ENCODE measurements at regions of chr15 and their contacts with region 1.

Region 1: GRCh38 chr15:31326156-31326732 is 391 bp upstream of the KLF13 start:
- DNase-seq: peak; percentile 99 to 100 (median 100)
- ATAC-seq: peak; percentile 73
- H3K4me3 ChIP-seq: peak overlapping the region; percentile 55 to 82
- H3K4me3 Mint-ChIP-seq: peak overlapping the region; percentile 85
- H3K27ac ChIP-seq: peak overlapping the region; percentile 81 to 96
- H3K27ac Mint-ChIP-seq: peak overlapping the region; percentile 97
- H3K4me1 ChIP-seq: peaks cover 43% of the 10 kb centered on the region
- H3K4me1 Mint-ChIP-seq: peaks cover 60% of the 10 kb centered on the region
- H3K27me3 ChIP-seq: no peaks in the 10 kb centered on the region
- H3K27me3 Mint-ChIP-seq: no peaks in the 10 kb centered on the region
- CTCF ChIP-seq: no peak

Region 2: DNA sequence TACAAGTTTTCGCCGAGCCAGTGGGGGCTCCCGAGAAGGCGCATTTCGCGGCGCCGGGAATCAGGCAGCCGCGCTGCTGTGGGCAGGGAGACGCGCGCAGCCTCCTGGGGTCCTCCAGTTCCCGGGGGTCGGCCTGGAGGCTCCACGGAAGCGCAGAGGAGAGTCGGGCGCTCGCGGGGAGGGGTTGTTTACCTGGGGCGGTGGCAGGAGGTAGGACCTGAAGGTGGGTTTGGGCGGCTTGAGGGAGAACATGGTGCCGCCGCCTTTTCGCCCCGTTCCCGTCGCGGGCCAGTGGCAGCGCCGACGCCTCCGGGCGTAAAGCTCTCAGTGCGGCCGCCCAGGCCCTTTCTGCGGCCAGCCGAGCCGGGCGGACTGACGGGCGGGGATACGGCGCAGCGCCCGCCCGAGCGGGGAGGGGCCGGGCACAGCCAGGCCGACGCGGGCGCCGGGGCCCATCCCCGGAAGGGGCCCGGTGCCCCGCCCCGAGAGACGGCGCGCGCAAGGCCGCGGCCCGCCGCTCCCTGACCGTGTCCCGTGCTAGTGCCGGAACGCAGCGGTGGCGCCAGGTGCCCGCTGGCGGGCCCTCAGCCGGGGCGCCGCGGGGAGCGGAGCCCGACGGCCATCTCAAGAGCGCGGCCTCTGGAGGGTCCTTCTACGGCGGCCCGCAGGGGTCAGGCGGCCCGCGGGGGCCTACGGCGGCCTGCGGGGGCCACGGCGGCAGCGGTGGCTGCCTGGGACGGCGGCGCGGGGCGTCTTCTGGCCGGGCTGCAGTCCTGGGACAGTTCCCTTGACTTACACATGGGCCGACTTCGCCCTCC is 334.8 kb before region 1 on chr15 and contains the start of gene MTMR10:
- CTCF ChIA-PET with region 1: no interaction called
- POLR2A ChIA-PET with region 1: no interaction called
- intact Hi-C with region 1: loop called (anchors 5 kb)
- DNase-seq: peak; percentile 62 to 86 (median 69)
- ATAC-seq: peak; percentile 93
- H3K4me3 ChIP-seq: peak within 1 kb of the TSS; percentile 71 to 93
- H3K4me3 Mint-ChIP-seq: peak within 1 kb of the TSS; percentile 94
- H3K27ac ChIP-seq: peak within 1 kb of the TSS; percentile 75 to 77
- H3K27ac Mint-ChIP-seq: peak within 1 kb of the TSS; percentile 95
- H3K4me1 ChIP-seq: peaks cover 26% of the 10 kb centered on the region
- H3K4me1 Mint-ChIP-seq: peaks cover 34% of the 10 kb centered on the region
- H3K27me3 ChIP-seq: no peaks in the 10 kb centered on the region
- H3K27me3 Mint-ChIP-seq: no peaks in the 10 kb centered on the region
- CTCF ChIP-seq: no peak
- total RNA-seq, gene MTMR10: 54.7 to 56.4 TPM

Region 3: GRCh38 chr15:31215490-31216214 is 110.6 kb before region 1 on chr15:
- CTCF ChIA-PET with region 1: interaction called, 6 read pairs
- POLR2A ChIA-PET with region 1: interaction called, 29 read pairs
- intact Hi-C with region 1: loop called (anchors 1 kb)
- DNase-seq: peak; percentile 56 to 91 (median 84)
- ATAC-seq: peak; percentile 76
- H3K4me3 ChIP-seq: peak overlapping the region; percentile 32 to 55
- H3K4me3 Mint-ChIP-seq: peak overlapping the region; percentile 56
- H3K27ac ChIP-seq: peak overlapping the region; percentile 56 to 75
- H3K27ac Mint-ChIP-seq: peak overlapping the region; percentile 83
- H3K4me1 ChIP-seq: peaks cover 21% of the 10 kb centered on the region
- H3K4me1 Mint-ChIP-seq: peaks cover 30% of the 10 kb centered on the region
- H3K27me3 ChIP-seq: no peaks in the 10 kb centered on the region
- H3K27me3 Mint-ChIP-seq: no peaks in the 10 kb centered on the region
- CTCF ChIP-seq: peak; percentile 73

Region 4: DNA sequence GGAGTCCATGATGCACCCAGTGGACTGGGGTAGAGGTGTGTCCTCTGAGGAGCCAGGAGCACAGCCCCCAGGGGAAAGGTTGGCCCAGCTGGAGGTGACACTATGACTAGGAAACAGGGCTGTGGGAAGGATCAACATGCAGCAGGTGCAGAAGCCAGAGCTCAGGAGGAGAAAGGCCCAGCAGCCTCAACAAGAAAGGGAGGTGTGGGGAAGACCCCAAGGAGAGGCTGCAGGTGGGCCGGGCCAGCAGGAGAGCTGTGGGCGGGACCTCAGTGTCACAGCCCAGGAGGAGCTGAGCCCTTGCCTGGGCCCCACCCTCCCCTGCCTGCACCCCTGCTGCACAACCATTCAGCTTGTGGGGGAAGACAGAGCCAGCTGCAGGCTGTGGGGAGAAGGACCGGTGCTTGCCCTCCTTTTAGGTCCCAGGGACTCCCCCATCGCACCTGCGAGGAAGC is 18.0 kb before region 1 on chr15:
- CTCF ChIA-PET with region 1: interaction called, 3 read pairs
- POLR2A ChIA-PET with region 1: interaction called, 11 read pairs
- intact Hi-C with region 1: no loop called
- DNase-seq: peak in 5 of 9 experiments; percentile 15 to 62 (median 38)
- ATAC-seq: peak; percentile 71
- H3K4me3 ChIP-seq: no peak overlapping the region
- H3K4me3 Mint-ChIP-seq: peak overlapping the region; percentile 19
- H3K27ac ChIP-seq: no peak overlapping the region
- H3K27ac Mint-ChIP-seq: no peak overlapping the region
- H3K4me1 ChIP-seq: peaks cover 35% of the 10 kb centered on the region
- H3K4me1 Mint-ChIP-seq: peaks cover 44% of the 10 kb centered on the region
- H3K27me3 ChIP-seq: peaks cover 0 to 3% of the 10 kb centered on the region in 2 experiments
- H3K27me3 Mint-ChIP-seq: no peaks in the 10 kb centered on the region
- CTCF ChIP-seq: no peak

Region 5: DNA sequence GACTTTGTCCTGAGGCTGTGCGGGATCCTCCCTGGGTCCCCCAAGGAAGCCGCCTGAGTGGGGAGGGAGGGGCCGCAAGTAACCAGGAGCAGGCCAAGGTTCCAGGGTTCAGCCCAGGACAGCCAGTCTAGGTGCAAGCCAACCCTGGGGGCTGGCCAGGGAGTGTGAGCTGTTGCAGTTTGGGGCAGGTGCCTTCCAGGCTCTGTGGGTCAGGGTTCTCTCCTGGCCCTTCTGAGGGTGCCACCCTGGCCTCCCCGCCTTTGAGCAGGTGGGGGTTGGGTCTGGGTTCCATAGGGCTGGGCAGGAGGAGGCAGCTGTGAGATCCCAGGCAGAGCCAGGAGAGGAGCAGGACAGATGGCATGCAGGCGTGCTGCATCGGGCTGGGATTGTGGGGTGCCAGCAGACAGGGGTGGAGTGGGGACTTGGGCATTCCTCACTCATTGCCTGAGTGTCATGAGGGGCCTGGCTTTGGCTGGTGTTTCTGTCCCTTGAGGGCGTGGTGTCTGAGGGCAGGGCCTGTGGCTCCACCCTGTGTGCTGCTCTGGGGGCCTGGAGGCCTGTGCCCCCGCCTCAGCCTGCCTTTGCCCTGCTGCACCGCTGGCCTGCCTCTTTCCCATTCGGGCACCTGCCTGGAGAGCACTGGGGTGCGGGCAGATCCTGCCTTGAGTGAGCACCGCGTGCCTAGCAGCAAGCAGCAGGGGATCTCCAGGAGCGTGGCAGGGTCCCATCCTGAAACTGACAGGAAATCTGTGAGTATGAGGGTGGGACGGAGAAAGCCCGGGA is 18.8 kb after region 1 on chr15:
- CTCF ChIA-PET with region 1: interaction called, 7 read pairs
- POLR2A ChIA-PET with region 1: interaction called, 86 read pairs
- intact Hi-C with region 1: loop called (anchors 1 kb)
- DNase-seq: peak in 1 of 9 experiments; percentile 68
- ATAC-seq: no peak
- H3K4me3 ChIP-seq: peak overlapping the region; percentile 55 to 72
- H3K4me3 Mint-ChIP-seq: peak overlapping the region; percentile 91
- H3K27ac ChIP-seq: peak overlapping the region; percentile 70 to 78
- H3K27ac Mint-ChIP-seq: peak overlapping the region; percentile 97
- H3K4me1 ChIP-seq: peaks cover 99% of the 10 kb centered on the region
- H3K4me1 Mint-ChIP-seq: peaks cover 98% of the 10 kb centered on the region
- H3K27me3 ChIP-seq: no peaks in the 10 kb centered on the region
- H3K27me3 Mint-ChIP-seq: no peaks in the 10 kb centered on the region
- CTCF ChIP-seq: no peak

Region 6: DNA sequence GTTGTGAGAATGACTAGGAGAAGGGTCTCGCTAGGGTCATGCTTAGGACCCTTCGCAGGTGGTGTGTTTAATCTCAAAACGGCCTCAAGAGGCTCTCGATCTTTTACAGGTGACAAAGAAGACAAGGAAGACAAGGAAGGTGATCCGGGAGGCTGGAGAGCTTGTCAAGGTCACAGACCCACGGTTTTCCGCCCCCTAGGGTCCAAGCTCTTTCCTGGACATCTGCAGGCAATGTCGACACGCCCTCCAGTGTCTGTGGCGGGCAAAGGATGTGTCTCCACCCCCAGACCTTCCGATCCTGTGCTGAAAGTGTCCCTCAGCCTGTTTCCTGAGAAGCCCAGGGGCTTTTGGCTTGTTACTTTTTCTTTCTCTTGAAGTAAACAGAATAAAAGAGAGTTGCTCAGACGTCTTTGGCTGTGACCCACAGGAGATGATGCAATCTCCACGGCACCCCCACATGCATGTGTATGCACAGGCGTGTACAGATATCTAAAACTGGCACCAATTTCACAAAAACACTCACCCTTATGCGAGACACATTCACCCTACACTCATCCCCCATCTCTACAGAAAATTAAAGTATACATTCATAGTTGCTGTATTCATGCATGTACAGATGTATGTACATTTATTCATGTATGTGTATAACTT is 109.1 kb after region 1 on chr15:
- CTCF ChIA-PET with region 1: interaction called, 4 read pairs
- POLR2A ChIA-PET with region 1: interaction called, 35 read pairs
- intact Hi-C with region 1: loop called (anchors 1 kb)
- DNase-seq: peak; percentile 62 to 96 (median 84)
- ATAC-seq: peak; percentile 70
- H3K4me3 ChIP-seq: peak overlapping the region; percentile 43 to 46
- H3K4me3 Mint-ChIP-seq: peak overlapping the region; percentile 80
- H3K27ac ChIP-seq: peak overlapping the region; percentile 89 to 95
- H3K27ac Mint-ChIP-seq: peak overlapping the region; percentile 98
- H3K4me1 ChIP-seq: peaks cover 66% of the 10 kb centered on the region
- H3K4me1 Mint-ChIP-seq: peaks cover 83% of the 10 kb centered on the region
- H3K27me3 ChIP-seq: no peaks in the 10 kb centered on the region
- H3K27me3 Mint-ChIP-seq: no peaks in the 10 kb centered on the region
- CTCF ChIP-seq: peak; percentile 33

Region 7: DNA sequence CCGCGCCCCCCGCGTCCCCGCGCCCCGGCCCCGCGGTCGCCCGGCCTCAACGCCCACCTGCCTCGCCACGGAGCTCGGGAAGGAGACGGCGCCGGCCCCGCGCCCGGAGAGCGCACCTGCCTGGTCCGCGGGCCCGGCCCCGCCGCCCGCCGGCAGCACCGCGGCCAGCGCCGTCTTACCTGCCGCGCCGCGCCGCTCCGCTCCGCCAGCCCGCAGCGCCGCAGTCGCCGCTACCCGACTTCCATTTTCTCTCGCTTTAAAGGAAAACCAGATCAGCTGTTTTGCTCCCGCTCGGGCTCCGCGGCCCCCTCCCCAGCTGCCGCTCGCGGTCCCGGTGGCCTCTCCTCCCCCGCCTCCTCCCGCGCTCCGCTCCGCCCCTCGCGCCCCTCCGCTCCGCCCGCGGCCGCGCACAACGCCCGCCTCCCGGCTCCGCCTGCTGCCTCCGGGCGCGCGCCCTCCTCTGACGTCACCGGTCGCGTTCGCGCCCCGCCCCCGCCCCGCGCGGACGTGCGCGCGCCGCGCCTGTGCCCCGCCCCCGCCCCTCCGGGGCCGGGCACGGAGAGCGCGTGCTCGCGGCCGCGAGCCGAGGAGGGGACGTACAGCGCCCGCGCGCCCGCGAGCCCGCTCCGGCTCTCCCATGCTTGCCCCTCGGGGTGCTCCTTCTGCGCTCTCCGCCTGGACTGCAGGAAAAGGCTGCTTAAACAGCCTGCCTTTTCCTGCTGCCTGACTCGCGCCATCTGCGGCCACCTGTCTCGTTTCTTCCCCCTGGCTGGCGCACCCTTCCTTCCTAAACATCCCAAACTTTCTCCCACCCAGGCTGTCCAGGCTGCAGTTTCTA is 544.3 kb after region 1 on chr15:
- CTCF ChIA-PET with region 1: no interaction called
- POLR2A ChIA-PET with region 1: no interaction called
- intact Hi-C with region 1: loop called in 1 of 2 experiments (anchors 5 kb)
- DNase-seq: peak; percentile 66 to 93 (median 85)
- ATAC-seq: peak; percentile 87
- H3K4me3 ChIP-seq: peak within 1 kb of the TSS; percentile 71 to 83
- H3K4me3 Mint-ChIP-seq: peak within 1 kb of the TSS; percentile 87
- H3K27ac ChIP-seq: peak within 1 kb of the TSS; percentile 52 to 64
- H3K27ac Mint-ChIP-seq: peak within 1 kb of the TSS; percentile 85
- H3K4me1 ChIP-seq: peaks cover 10% of the 10 kb centered on the region
- H3K4me1 Mint-ChIP-seq: peaks cover 13% of the 10 kb centered on the region
- H3K27me3 ChIP-seq: no peaks in the 10 kb centered on the region
- H3K27me3 Mint-ChIP-seq: peaks cover 10% of the 10 kb centered on the region
- CTCF ChIP-seq: no peak

Measured in CD8-positive, alpha-beta T cell (primary cell).